GM10248 (cell line): ENCODE measurements at regions of chr2 and their contacts with region 1.

Region 1: DNA sequence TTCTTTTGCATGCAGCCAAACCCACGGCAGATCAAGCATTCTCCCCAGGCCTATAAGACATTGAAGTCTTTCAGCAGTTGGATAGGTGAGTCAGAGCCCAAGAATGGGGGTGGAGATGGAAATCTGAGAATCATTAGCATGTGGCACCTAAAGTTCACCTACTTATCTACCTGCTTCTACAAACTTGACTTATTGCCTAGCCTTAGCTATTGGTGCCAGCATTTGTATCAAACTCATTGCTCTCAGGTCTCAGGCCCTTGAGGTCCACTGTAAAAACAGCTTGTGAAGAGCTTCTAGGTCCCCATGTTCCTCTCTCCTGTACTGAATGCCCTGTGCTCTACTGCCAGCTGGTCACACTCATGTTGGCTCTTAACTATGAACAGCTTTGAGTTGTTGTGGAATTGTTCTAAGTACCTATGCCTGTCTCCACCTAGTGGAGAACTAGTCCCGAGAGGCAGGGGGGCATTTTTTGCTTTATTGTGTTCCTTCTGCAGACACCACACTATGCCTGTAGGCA is 278.4 kb upstream of the SPRED2 start:
- DNase-seq: no peak
- CTCF ChIP-seq: peak; percentile 39

Region 2: DNA sequence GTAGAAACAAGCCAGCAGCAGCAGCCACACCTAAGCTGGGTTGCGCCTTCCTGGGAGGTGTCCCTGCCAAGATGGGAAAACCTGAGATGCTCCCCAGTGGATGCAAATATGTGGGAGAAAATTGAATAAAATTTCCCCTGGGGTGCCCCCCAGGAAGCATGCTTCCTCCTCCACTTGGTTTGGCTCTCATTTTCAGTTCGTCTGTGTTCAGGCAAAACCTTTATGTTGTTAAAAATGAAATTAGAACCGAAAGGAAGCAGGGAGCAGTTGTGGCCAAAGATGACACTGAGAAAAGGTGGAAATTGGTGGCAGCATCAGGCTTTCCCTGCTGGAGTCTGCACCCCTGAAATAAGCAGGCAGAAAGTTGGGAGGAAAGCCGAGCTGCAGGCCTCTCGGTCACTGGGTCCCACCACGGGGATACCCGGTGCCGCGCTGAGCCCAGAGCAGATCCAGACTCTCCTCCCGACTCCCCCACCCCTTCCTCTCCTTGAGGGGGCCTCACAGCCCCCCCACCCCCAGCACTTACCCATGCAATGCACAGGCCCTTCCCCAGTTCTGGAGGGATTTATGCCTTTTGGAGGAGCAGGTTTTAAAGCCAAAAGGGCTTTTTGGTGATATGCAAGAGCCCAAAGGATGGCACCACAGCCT is 10.7 kb before region 1 on chr2:
- CTCF ChIA-PET with region 1: interaction called, 11 read pairs
- POLR2A ChIA-PET with region 1: no interaction called
- DNase-seq: peak; percentile 28
- CTCF ChIP-seq: no peak